Aorta (tissue), 5 donors: ENCODE measurements at regions of chr13 and their contacts with region 1.

Region 1: DNA sequence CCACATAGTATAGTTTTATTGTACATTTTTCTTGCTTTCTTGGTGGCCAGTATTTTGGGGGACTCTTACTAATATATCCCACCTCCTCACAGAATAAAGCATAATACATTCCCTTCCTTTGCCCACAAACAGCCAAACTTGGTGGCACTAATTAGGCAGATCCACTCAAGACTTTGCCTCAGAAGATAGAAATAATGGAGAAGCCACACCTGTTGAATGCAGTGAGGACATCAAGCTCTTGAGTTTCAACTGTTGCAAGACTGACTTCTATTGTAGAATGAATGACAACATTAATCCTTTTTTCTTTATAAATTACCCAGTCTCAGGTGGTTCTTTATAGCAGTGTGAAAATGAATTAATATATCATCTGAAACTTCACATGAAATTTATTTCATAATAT is 1183.6 kb upstream of the ATXN8OS start:
- DNase-seq: no peak
- ATAC-seq: no peak
- H3K4me3 ChIP-seq: no peak overlapping the region
- H3K27ac ChIP-seq: no peak overlapping the region
- H3K4me1 ChIP-seq: no peaks in the 10 kb centered on the region
- H3K27me3 ChIP-seq: no peaks in the 10 kb centered on the region

Region 2: DNA sequence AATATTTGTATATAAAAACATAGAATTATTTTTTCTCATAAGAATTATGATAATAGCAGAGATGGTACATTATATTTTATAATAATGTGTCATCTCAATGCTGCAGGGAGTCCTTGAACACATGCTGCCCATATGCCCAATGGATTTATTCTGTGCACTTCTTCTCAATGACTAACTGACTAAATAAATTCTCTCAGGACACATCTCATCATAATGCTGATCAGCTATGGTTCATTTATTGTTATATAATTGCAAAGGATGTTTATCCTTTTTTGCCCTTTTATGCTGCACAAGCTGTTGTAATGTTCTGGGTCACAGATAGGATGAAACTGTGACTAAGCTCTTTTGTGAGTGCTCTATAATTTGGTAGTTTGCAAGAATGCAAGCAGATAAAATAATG is 89.6 kb before region 1 on chr13:
- intact Hi-C with region 1: no loop called
- DNase-seq: no peak
- ATAC-seq: no peak
- H3K4me3 ChIP-seq: no peak overlapping the region
- H3K27ac ChIP-seq: no peak overlapping the region
- H3K4me1 ChIP-seq: no peaks in the 10 kb centered on the region
- H3K27me3 ChIP-seq: no peaks in the 10 kb centered on the region

Region 3: DNA sequence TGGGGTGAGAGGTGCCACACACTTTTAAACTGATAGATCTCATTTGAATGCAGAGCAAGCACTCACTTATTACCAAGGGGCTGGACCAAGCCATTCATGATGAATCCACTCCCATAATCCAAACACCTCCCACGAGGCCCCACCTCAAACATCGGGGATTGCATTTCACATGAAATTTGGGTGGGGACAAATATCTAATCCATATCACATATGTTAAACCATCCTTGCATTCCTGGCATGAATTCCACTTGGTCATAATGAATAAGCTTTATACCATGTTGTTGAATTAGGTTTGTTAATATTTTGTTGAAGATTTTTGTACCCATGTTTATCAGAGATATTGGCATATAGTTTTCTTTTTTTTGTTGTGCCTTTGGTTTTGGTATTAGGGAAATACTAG is 15.1 kb before region 1 on chr13:
- intact Hi-C with region 1: loop called in 1 of 2 experiments (anchors 1 kb)
- DNase-seq: no peak
- ATAC-seq: no peak
- H3K4me3 ChIP-seq: no peak overlapping the region
- H3K27ac ChIP-seq: no peak overlapping the region
- H3K4me1 ChIP-seq: no peaks in the 10 kb centered on the region
- H3K27me3 ChIP-seq: no peaks in the 10 kb centered on the region